Activated CD8-positive, alpha-beta memory T cell treated with anti-CD3 and anti-CD28 coated beads, Interleukin-2, amount 10 ng/mL, durations not matched to agents 7 days and 5 days (primary cell): ENCODE measurements at regions of chr2 and their contacts with region 1.

Region 1: DNA sequence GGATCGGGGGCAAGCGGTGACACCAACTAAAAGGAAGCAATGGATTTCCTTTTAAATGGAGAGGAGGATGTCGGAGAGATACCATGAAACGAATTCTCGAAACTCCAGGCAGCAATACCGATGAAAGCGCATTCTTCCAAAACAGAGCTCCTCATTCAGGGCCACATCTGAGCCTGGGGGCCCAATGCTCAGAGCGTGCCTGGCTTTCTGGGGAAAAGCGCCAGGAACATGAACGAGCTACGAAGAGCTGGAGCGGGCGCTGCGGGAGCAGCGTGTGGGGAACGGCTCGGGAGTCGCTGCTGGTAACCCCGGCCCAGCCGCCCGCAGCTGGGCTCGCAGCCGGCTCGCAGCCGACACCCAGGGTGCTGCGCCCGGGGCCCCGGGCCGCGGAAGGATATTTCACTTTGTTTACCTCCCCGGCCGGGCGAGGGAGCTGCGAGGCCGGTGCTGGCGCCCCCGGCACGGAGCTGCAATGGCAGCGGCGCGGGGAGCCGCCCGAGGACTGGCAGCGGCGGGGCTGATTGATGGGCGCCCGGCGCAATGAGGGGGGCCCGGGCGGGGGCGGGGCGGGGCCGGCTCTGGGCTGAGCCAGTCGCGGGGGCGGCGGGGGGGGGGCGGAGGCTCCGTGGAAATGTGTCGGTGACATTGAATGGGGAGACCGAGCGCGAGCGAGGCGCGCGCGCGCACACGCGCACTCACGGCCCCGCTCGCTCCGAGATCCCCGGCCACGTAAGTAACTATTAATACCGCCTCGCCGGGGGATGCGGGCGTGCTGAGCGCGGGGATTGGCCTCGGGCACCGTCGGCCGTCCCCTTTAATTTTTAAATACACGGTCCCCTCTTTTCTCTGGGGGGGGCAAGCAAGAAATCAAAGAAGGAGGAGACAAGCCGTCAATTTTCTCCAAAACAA is at the start of gene TRIB2:
- DNase-seq: peak; percentile 92
- ATAC-seq: peak; percentile 88
- H3K4me3 Mint-ChIP-seq: peak within 1 kb of the TSS; percentile 94
- H3K27ac Mint-ChIP-seq: peak within 1 kb of the TSS; percentile 88
- H3K4me1 Mint-ChIP-seq: peaks cover 40% of the 10 kb centered on the region
- H3K27me3 Mint-ChIP-seq: peaks cover 12% of the 10 kb centered on the region
- total RNA-seq, gene TRIB2: 14.3 to 28.5 TPM

Region 2: DNA sequence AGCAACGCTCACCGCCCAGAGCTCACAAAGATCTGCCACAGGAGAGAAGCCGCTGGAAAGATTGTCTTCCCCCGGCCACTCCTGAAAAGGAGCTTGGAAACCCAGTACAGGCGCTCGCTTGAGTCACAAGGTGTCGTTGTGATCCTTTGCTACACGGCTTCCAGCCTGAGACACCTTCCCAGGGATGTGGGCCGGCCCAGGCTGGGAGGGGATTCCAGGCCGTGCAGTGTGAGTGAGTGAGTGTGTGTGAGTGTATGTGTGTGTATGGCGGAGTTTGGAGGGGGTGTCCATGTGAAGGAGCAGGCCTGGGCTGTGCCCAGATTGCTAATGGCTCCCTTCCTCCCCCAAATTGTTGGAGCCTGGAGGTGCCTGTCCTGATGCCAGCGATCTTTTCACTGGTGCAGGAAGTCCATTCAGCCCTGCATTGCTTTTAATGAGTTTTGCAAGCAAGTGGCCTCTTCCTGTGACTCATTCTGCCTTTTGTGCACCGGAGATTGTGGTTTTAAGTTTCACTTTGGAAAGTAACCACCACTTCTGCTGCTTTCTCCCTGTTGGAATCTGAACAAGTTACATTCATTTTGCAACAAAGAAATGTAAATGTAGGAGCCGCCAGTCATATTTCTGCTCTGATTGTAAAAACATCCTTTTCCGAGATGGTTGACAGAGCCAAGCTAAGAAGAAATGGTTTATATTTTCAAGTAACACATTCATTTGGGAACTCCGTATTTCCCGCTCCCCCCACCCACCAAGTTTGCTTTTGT is 886.4 kb before region 1 on chr2:
- CTCF ChIA-PET with region 1: interaction called, 15 read pairs
- DNase-seq: peak; percentile 78
- ATAC-seq: peak; percentile 89
- H3K4me3 Mint-ChIP-seq: peak overlapping the region; percentile 45
- H3K27ac Mint-ChIP-seq: peak overlapping the region; percentile 44
- H3K4me1 Mint-ChIP-seq: peaks cover 36% of the 10 kb centered on the region
- H3K27me3 Mint-ChIP-seq: peaks cover 45% of the 10 kb centered on the region

Region 3: DNA sequence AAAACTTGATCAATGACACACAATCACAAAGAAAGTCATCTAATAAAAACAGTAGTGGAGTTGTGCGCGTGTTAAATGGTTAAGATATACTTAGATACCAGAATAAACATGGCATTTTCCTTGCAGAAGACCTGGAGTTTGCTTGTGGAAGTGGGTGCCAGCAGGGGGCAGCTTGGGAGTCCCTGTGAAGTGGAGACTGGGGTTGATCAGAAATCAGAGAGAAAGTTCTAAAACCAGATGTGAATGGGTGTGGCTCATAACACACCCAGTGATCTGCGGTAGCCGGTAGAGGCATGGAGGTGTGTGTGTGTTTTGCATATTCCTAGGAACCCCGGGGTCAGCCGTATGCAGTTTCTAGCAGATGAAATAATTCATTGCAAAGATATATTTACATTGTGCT is 299.9 kb before region 1 on chr2:
- CTCF ChIA-PET with region 1: interaction called, 42 read pairs
- DNase-seq: peak; percentile 67
- ATAC-seq: peak; percentile 70
- H3K4me3 Mint-ChIP-seq: no peak overlapping the region
- H3K27ac Mint-ChIP-seq: no peak overlapping the region
- H3K4me1 Mint-ChIP-seq: peaks cover 42% of the 10 kb centered on the region
- H3K27me3 Mint-ChIP-seq: no peaks in the 10 kb centered on the region

Region 4: DNA sequence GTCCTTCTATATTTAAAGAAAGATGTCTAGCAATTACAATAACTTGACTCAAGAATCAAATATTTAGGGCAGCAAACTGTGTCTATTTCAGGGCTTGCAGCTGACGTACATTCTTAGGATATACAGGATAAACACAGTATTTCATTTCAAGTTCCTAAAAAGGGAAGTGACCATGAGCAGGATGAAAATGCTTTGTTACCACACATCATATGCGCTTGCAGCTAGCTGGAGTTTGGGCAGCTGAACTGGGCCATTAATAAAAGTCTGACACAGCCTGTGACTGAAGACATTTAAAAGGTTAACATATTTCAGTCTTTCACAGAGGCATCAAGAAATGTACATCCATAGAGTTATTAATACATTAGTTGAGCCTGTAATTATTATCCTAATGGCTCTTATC is 264.3 kb before region 1 on chr2:
- CTCF ChIA-PET with region 1: interaction called, 16 read pairs
- DNase-seq: no peak
- ATAC-seq: no peak
- H3K4me3 Mint-ChIP-seq: peak overlapping the region; percentile 62
- H3K27ac Mint-ChIP-seq: peak overlapping the region; percentile 85
- H3K4me1 Mint-ChIP-seq: peaks cover 35% of the 10 kb centered on the region
- H3K27me3 Mint-ChIP-seq: no peaks in the 10 kb centered on the region

Region 5: GRCh38 chr2:12931186-12931844 is 214.8 kb after region 1 on chr2:
- CTCF ChIA-PET with region 1: interaction called, 38 read pairs
- DNase-seq: no peak
- ATAC-seq: peak; percentile 55
- H3K4me3 Mint-ChIP-seq: no peak overlapping the region
- H3K27ac Mint-ChIP-seq: no peak overlapping the region
- H3K4me1 Mint-ChIP-seq: no peaks in the 10 kb centered on the region
- H3K27me3 Mint-ChIP-seq: peaks cover 39% of the 10 kb centered on the region